Transverse colon (tissue), 4 donors: ENCODE measurements at regions of chr7 and their contacts with region 1.

Region 1: GRCh38 chr7:133556048-133556447 is 303.2 kb downstream of the EXOC4 start:
- DNase-seq: no peak
- H3K4me3 ChIP-seq: no peak overlapping the region
- H3K27ac ChIP-seq: no peak overlapping the region
- H3K4me1 ChIP-seq: no peaks in the 10 kb centered on the region
- H3K27me3 ChIP-seq: no peaks in the 10 kb centered on the region
- CTCF ChIP-seq: no peak
- EP300 ChIP-seq: no peak
- POLR2A ChIP-seq: no peak

Region 2: GRCh38 chr7:133863362-133864061 is 307.5 kb after region 1 on chr7:
- in situ Hi-C with region 1: no loop called
- intact Hi-C with region 1: loop called (anchors 5 kb)
- DNase-seq: no peak
- H3K4me3 ChIP-seq: no peak overlapping the region
- H3K27ac ChIP-seq: no peak overlapping the region
- H3K4me1 ChIP-seq: peaks cover 0 to 14% (median 4%) of the 10 kb centered on the region in 4 donors
- H3K27me3 ChIP-seq: no peaks in the 10 kb centered on the region
- CTCF ChIP-seq: no peak
- EP300 ChIP-seq: no peak
- POLR2A ChIP-seq: no peak